ENCODE measurements at regions of chr15 and their contacts with region 1.

Region 1: DNA sequence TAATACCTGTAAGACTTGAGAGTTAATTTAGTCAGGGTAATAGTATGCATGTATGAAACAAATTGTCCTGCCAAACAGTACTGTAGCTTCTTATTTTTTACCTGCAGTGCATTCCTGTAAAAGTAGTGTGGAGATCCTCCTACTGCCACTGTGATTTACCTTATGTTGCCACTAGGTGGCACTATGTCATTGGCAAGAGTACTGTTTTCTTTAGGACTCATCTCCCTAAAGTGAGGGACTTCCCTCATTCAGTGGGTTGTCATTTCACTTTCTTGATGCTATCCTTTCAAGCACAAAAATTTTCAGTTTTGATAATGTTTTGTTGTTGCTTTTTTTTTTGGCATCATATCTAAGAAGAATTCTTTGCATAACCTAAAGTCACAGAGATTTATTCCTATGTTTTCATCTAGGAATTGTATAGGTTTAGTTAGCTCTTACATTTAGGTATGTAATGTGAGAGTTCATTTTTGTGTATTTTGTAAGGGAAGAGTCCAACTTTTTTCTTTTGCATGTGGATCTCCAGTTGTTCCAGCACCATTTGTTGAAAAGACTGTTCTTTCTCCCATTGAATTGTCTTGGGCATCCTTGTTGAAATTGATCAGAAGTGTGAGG is 105.7 kb downstream of the AKAP13 start:
- ATAC-seq: peak; percentile 44 to 93 (median 64)
- H3K4me3 ChIP-seq: no peak overlapping the region
- H3K27ac ChIP-seq: no peak overlapping the region
- H3K4me1 ChIP-seq: peaks cover 14 to 20% of the 10 kb centered on the region in 2 donors

Region 2: GRCh38 chr15:85318048-85318731 is 167.9 kb before region 1 on chr15:
- in situ Hi-C with region 1: loop called in 2 of 9 experiments (anchors 25 kb)
- ATAC-seq: peak in 3 of 8 experiments; percentile 76 to 97 (median 92)
- H3K4me3 ChIP-seq: no peak overlapping the region
- H3K27ac ChIP-seq: no peak overlapping the region
- H3K4me1 ChIP-seq: no peaks in the 10 kb centered on the region

Region 3: GRCh38 chr15:85831415-85832113 is 345.5 kb after region 1 on chr15:
- in situ Hi-C with region 1: loop called in 2 of 9 experiments (anchors 10 to 25 kb)
- ATAC-seq: peak; percentile 76 to 99 (median 89)
- H3K4me3 ChIP-seq: no peak overlapping the region
- H3K27ac ChIP-seq: no peak overlapping the region
- H3K4me1 ChIP-seq: peaks cover 3 to 10% of the 10 kb centered on the region in 2 donors

Region 4: GRCh38 chr15:85840065-85840801 is 354.2 kb after region 1 on chr15:
- in situ Hi-C with region 1: loop called in 2 of 9 experiments (anchors 10 to 25 kb)
- ATAC-seq: peak; percentile 84 to 99 (median 98)
- H3K4me3 ChIP-seq: peak overlapping the region; percentile 3 to 30 (median 17)
- H3K27ac ChIP-seq: no peak overlapping the region
- H3K4me1 ChIP-seq: peaks cover 0 to 4% of the 10 kb centered on the region in 2 donors